HEK293T (cell line): ENCODE measurements at regions of chr6 and their contacts with region 1.

Region 1: GRCh38 chr6:73515204-73515655 is 5.6 kb downstream of the EEF1A1 start:
- DNase-seq: no peak

Region 2: DNA sequence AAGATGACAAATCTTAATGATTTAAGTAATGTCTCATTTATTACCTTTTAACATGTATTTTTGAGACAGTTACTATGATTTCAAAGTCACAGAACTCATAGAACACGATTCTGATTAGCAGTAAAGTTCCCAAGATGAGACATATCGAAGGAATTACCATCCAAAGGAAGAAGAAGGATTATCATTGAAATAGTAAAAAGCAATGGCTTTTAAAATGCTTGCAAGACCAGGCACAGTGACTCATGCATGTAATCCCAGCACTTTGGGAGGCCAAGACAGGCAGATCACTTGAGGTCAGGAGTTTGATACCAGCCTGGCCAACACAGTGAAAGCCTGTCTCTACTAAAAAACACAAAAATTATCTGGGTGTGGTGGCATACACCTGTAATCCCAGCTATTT is 509.1 kb before region 1 on chr6:
- CTCF ChIA-PET with region 1: no interaction called
- POLR2A ChIA-PET with region 1: no interaction called
- DNase-seq: no peak

Region 3: GRCh38 chr6:73585566-73586415 is 70.6 kb after region 1 on chr6:
- CTCF ChIA-PET with region 1: interaction called, 5 read pairs
- POLR2A ChIA-PET with region 1: interaction called, 49 read pairs
- DNase-seq: peak; percentile 38